ENCODE measurements at regions of chr18 and their contacts with region 1.

Region 1: DNA sequence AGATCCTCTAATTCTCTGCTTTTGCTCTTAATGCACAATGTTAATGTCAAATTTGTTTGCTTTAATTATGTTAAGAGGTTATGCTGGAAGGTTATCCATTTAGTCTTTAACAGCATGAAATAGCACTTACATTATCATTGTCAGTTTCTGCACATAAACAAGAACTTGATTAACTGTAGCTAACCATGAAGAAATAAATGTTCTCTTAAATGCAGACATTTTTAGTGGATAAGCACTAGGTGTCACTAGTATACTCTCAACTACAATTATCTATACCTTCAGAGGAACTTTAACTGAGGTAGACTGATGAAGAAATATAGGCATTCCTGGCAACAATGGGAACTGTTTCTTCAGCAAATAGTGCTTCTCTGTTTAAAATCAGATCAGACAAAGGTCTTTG is 178.8 kb upstream of the CHST9 start:
- DNase-seq: no peak
- H3K4me3 ChIP-seq: no peak overlapping the region
- H3K27ac ChIP-seq: no peak overlapping the region
- H3K4me1 ChIP-seq: no peaks in the 10 kb centered on the region
- H3K27me3 ChIP-seq: no peaks in the 10 kb centered on the region
- CTCF ChIP-seq: peak; percentile 49; the same call in 1 of the 2 replicates

Region 2: DNA sequence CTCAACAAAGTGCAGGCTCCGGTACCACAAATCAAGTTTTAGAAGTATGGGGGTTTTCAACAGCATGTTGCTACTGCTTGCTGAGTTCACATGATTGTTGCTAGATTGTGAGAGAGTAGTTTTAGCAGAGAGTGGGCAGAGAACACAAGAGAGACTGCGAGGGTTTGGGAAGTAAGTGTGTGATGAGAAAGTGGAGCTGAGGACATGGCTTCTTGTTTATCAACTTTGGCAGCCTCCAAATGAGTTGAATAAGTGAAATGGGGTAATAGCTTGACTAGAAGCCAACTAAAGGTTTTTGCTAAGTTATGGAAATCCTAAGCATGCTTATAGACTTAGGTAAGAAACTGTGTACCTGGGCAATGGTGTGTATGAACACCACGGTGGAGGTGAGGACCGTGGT is 313.9 kb before region 1 on chr18:
- CTCF ChIA-PET with region 1: no interaction called
- POLR2A ChIA-PET with region 1: no interaction called
- intact Hi-C with region 1: no loop called
- DNase-seq: no peak
- H3K4me3 ChIP-seq: no peak overlapping the region
- H3K27ac ChIP-seq: no peak overlapping the region
- H3K4me1 ChIP-seq: no peaks in the 10 kb centered on the region
- H3K27me3 ChIP-seq: no peaks in the 10 kb centered on the region
- CTCF ChIP-seq: no peak

Region 3: DNA sequence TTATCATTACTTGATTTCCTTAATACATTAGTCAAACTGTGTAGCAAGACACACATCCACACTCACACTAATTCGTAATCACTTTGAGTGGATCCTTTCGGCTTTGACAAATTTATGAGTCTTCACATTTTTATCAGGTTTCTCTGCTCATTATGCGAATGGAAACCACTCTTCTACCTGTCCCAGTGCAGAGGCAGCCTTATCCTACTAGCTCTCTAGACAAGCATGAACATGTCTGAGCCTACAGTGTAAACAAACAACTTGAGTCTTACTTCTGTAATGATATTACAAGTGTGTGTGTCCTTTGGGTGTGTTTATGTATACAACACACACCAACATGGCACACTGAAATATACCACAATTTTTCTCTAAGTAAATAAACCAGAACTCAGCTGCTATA is 183.1 kb after region 1 on chr18:
- CTCF ChIA-PET with region 1: no interaction called
- POLR2A ChIA-PET with region 1: no interaction called
- intact Hi-C with region 1: no loop called
- DNase-seq: no peak
- H3K4me3 ChIP-seq: no peak overlapping the region
- H3K27ac ChIP-seq: no peak overlapping the region
- H3K4me1 ChIP-seq: no peaks in the 10 kb centered on the region
- H3K27me3 ChIP-seq: no peaks in the 10 kb centered on the region
- CTCF ChIP-seq: no peak

Region 4: DNA sequence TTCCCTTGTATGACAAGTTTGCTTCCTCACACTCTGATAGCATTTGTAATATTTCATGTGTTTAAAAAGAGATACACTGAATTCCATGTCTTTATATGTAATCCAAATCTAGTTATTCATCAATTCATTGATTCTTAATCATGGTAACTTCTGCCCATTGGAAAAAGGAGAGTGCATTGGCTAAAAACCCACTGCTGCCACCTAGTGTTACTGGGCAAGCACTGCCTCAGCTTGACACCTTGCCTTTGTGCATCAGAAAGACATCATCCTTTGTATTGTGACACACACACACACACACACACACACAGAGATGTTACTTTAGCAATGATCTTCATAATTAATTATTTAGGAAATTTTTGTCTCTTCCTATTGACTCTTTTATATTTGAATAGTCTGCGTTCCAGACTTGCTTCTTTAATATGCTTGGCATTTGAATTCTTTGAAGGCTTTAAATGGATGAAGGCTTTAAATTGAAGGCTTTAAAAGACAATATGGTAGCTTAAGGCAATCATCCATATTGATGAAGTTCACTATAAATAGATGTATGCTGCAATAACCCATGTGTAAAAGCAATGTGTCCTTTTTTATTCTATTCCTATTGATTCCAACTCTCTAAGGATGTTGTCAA is 235.4 kb after region 1 on chr18:
- CTCF ChIA-PET with region 1: interaction called, 3 read pairs
- POLR2A ChIA-PET with region 1: no interaction called
- intact Hi-C with region 1: loop called (anchors 1 kb)
- DNase-seq: no peak
- H3K4me3 ChIP-seq: no peak overlapping the region
- H3K27ac ChIP-seq: no peak overlapping the region
- H3K4me1 ChIP-seq: no peaks in the 10 kb centered on the region
- H3K27me3 ChIP-seq: no peaks in the 10 kb centered on the region
- CTCF ChIP-seq: peak; percentile 76

Measured in PC-9 (cell line).